AG04450 (cell line): ENCODE measurements at regions of chr5 and their contacts with region 1.

Region 1: GRCh38 chr5:146426853-146427618 is 20.1 kb upstream of the TCERG1 start:
- DNase-seq: no peak
- H3K4me3 ChIP-seq: no peak overlapping the region
- H3K27ac ChIP-seq: no peak overlapping the region
- H3K27me3 ChIP-seq: peaks cover 2% of the 10 kb centered on the region
- CTCF ChIP-seq: peak; percentile 74

Region 2: GRCh38 chr5:146410272-146410671 is 16.8 kb before region 1 on chr5:
- CTCF ChIA-PET with region 1: interaction called, 12 read pairs
- POLR2A ChIA-PET with region 1: no interaction called
- DNase-seq: no peak
- H3K4me3 ChIP-seq: no peak overlapping the region
- H3K27ac ChIP-seq: no peak overlapping the region
- H3K27me3 ChIP-seq: peaks cover 6% of the 10 kb centered on the region
- CTCF ChIP-seq: no peak

Region 3: GRCh38 chr5:146446853-146447733 is 20.1 kb after region 1 on chr5 and contains the start of gene TCERG1:
- CTCF ChIA-PET with region 1: interaction called, 15 read pairs
- POLR2A ChIA-PET with region 1: no interaction called
- DNase-seq: peak; percentile 100
- H3K4me3 ChIP-seq: peak within 1 kb of the TSS; percentile 93
- H3K27ac ChIP-seq: peak within 1 kb of the TSS; percentile 83
- H3K27me3 ChIP-seq: no peaks in the 10 kb centered on the region
- CTCF ChIP-seq: peak; percentile 75
- polyA plus RNA-seq, gene TCERG1: 43.1 and 46.4 TPM in 2 replicates